Activated naive CD4-positive, alpha-beta T cell treated with anti-CD3 and anti-CD28 coated beads for 36 hours (primary cell): ENCODE measurements at regions of chr17 and their contacts with region 1.

Region 1: GRCh38 chr17:51298508-51299371 is 38.4 kb downstream of the UTP18 start:
- DNase-seq: no peak
- H3K4me3 Mint-ChIP-seq: no peak overlapping the region
- H3K27ac Mint-ChIP-seq: no peak overlapping the region
- H3K4me1 Mint-ChIP-seq: peaks cover 1% of the 10 kb centered on the region
- H3K27me3 Mint-ChIP-seq: no peaks in the 10 kb centered on the region

Region 2: GRCh38 chr17:51270636-51271035 is 28.1 kb before region 1 on chr17:
- CTCF ChIA-PET with region 1: no interaction called
- intact Hi-C with region 1: no loop called
- DNase-seq: no peak
- H3K4me3 Mint-ChIP-seq: no peak overlapping the region
- H3K27ac Mint-ChIP-seq: peak overlapping the region; percentile 15
- H3K4me1 Mint-ChIP-seq: peaks cover 40% of the 10 kb centered on the region
- H3K27me3 Mint-ChIP-seq: no peaks in the 10 kb centered on the region

Region 3: GRCh38 chr17:51540151-51540550 is 241.4 kb after region 1 on chr17:
- CTCF ChIA-PET with region 1: interaction called, 6 read pairs
- intact Hi-C with region 1: loop called (anchors 1 kb)
- DNase-seq: peak; percentile 39
- H3K4me3 Mint-ChIP-seq: no peak overlapping the region
- H3K27ac Mint-ChIP-seq: no peak overlapping the region
- H3K4me1 Mint-ChIP-seq: peaks cover 15% of the 10 kb centered on the region
- H3K27me3 Mint-ChIP-seq: no peaks in the 10 kb centered on the region

Region 4: DNA sequence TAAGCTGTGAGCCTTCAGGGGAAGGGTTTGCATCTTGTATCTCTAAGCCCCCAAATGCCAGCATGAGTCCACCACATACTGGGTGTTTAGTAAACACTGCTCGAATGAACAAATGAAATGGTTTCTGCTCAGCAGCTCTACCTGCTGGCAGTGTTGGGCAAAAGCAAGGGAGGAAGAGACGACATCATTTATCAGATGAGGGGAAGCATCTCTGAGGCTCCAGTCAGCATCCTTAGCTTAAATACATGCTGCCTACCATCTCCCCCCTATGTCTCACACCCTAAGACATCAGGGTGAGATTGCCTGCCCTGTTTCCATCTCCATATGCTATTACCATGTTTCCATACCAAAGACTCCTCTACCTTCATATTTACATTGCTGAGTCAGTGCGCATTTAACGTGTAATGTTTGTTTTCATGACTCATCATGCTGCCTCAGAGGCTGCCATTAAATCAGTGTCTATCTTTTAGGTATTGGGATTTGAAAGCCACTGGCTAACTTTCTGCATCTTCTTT is 341.4 kb after region 1 on chr17:
- CTCF ChIA-PET with region 1: no interaction called
- intact Hi-C with region 1: loop called (anchors 5 kb)
- DNase-seq: peak; percentile 21
- H3K4me3 Mint-ChIP-seq: no peak overlapping the region
- H3K27ac Mint-ChIP-seq: no peak overlapping the region
- H3K4me1 Mint-ChIP-seq: no peaks in the 10 kb centered on the region
- H3K27me3 Mint-ChIP-seq: peaks cover 12% of the 10 kb centered on the region